Activated CD8-positive, alpha-beta T cell treated with anti-CD3 and anti-CD28 coated beads for 36 hours (primary cell): ENCODE measurements at regions of chrX and their contacts with region 1.

Region 1: GRCh38 chrX:101390664-101391525 is at the start of gene RPL36A:
- DNase-seq: peak; percentile 91
- ATAC-seq: peak; percentile 97
- H3K4me3 Mint-ChIP-seq: peak within 1 kb of the TSS; percentile 95
- H3K27ac Mint-ChIP-seq: peak within 1 kb of the TSS; percentile 97
- H3K4me1 Mint-ChIP-seq: peaks cover 17% of the 10 kb centered on the region
- H3K27me3 Mint-ChIP-seq: no peaks in the 10 kb centered on the region
- CTCF ChIP-seq: peak; percentile 47
- total RNA-seq, gene RPL36A: 264 to 302 TPM

Region 2: GRCh38 chrX:101219864-101220346 is 171.0 kb before region 1 on chrX:
- CTCF ChIA-PET with region 1: no interaction called
- POLR2A ChIA-PET with region 1: no interaction called
- intact Hi-C with region 1: no loop called
- DNase-seq: peak; percentile 3
- ATAC-seq: no peak
- H3K4me3 Mint-ChIP-seq: no peak overlapping the region
- H3K27ac Mint-ChIP-seq: no peak overlapping the region
- H3K4me1 Mint-ChIP-seq: peaks cover 5% of the 10 kb centered on the region
- H3K27me3 Mint-ChIP-seq: no peaks in the 10 kb centered on the region
- CTCF ChIP-seq: no peak

Region 3: GRCh38 chrX:101260431-101260830 is 130.5 kb before region 1 on chrX:
- CTCF ChIA-PET with region 1: no interaction called
- POLR2A ChIA-PET with region 1: no interaction called
- intact Hi-C with region 1: no loop called
- DNase-seq: no peak
- ATAC-seq: no peak
- H3K4me3 Mint-ChIP-seq: no peak overlapping the region
- H3K27ac Mint-ChIP-seq: no peak overlapping the region
- H3K4me1 Mint-ChIP-seq: peaks cover 12% of the 10 kb centered on the region
- H3K27me3 Mint-ChIP-seq: no peaks in the 10 kb centered on the region
- CTCF ChIP-seq: no peak

Region 4: DNA sequence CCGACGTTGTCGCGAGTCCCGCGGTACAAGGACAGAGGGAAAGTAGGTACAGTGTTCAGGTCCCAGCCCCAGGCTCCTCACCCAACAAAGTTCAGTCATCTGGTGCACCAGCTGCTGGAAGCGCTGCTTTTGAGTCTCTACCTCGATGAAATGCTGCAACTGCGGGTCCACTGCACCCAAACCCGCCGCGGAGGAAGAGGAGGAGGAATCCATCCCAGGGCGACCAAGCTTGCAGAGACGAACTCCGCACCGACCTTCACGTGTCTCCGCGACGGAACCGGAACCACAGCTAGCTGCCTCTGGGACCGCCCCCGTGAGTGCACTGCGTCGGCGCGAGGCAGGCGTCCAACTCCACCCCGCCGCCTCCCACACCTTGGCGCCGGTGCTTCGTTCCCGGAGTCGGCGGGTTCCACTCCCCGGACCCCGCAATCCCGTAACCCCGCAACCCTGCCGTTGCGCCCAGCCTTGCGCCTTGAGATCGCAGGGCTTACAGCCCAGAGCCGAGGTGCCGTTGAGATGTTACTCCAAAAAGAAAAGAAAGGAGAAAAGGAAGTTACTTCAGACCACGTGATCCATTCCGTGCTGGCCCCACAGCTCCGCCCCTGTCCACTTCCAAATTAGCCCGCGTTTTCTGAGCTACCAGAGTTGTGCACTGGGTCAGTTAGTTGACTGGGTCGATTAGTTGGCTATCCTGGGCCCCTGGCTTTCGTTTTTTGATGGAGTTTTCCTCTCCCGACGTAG is 42.3 kb before region 1 on chrX and contains the start of gene TIMM8A:
- CTCF ChIA-PET with region 1: interaction called, 15 read pairs
- POLR2A ChIA-PET with region 1: interaction called, 32 read pairs
- intact Hi-C with region 1: loop called (anchors 10 kb)
- DNase-seq: peak; percentile 85
- ATAC-seq: peak; percentile 96
- H3K4me3 Mint-ChIP-seq: peak within 1 kb of the TSS; percentile 86
- H3K27ac Mint-ChIP-seq: peak within 1 kb of the TSS; percentile 95
- H3K4me1 Mint-ChIP-seq: peaks cover 13% of the 10 kb centered on the region
- H3K27me3 Mint-ChIP-seq: no peaks in the 10 kb centered on the region
- CTCF ChIP-seq: no peak
- total RNA-seq, gene TIMM8A: 23.2 to 26.3 TPM

Region 5: GRCh38 chrX:101407748-101408531 is 17.0 kb after region 1 on chrX and contains the starts of genes GLA and HNRNPH2:
- CTCF ChIA-PET with region 1: interaction called, 19 read pairs
- POLR2A ChIA-PET with region 1: interaction called, 34 read pairs
- intact Hi-C with region 1: loop called (anchors 2 kb)
- DNase-seq: peak; percentile 96
- ATAC-seq: peak; percentile 93
- H3K4me3 Mint-ChIP-seq: peak within 1 kb of the TSS; percentile 99
- H3K27ac Mint-ChIP-seq: peak within 1 kb of the TSS; percentile 97
- H3K4me1 Mint-ChIP-seq: peaks cover 28% of the 10 kb centered on the region
- H3K27me3 Mint-ChIP-seq: peaks cover 2% of the 10 kb centered on the region
- CTCF ChIP-seq: no peak
- total RNA-seq, gene GLA: 38.8 to 44.6 TPM
- total RNA-seq, gene HNRNPH2: 18.3 to 18.5 TPM

Region 6: GRCh38 chrX:101478366-101478765 is 87.5 kb after region 1 on chrX:
- CTCF ChIA-PET with region 1: no interaction called
- POLR2A ChIA-PET with region 1: no interaction called
- intact Hi-C with region 1: no loop called
- DNase-seq: no peak
- ATAC-seq: no peak
- H3K4me3 Mint-ChIP-seq: no peak overlapping the region
- H3K27ac Mint-ChIP-seq: no peak overlapping the region
- H3K4me1 Mint-ChIP-seq: no peaks in the 10 kb centered on the region
- H3K27me3 Mint-ChIP-seq: no peaks in the 10 kb centered on the region
- CTCF ChIP-seq: no peak